GM12878 (cell line): ENCODE measurements at regions of chr16 and their contacts with region 1.

Region 1: DNA sequence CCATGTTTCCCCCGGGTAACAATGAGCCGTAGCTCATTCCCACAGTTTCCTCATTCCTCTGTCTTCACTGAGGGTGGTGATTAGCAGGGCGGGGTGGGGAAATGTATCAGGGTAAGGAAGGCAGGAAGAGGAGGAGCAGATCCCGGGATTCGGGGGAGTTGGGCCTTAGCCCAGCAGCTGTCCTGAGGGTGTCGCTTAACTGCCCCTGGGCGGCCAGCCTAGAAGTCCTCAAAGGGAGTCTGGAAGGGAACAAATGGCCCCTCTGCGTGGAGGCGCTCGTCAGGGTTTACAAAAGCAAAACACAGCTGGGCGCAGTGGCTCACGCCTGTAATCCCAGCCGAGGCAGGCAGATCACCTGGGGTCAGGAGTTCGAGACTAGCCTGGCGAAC is 14.3 kb downstream of the MLYCD start:
- DNase-seq: no peak
- ATAC-seq: no peak
- H3K4me3 ChIP-seq: no peak overlapping the region
- H3K27ac ChIP-seq: no peak overlapping the region
- H3K4me1 ChIP-seq: no peaks in the 10 kb centered on the region
- H3K27me3 ChIP-seq: no peaks in the 10 kb centered on the region
- CTCF ChIP-seq: no peak
- EP300 ChIP-seq: no peak
- POLR2A ChIP-seq: no peak
- RAD21 ChIP-seq: no peak

Region 2: GRCh38 chr16:83863682-83864081 is 49.6 kb before region 1 on chr16:
- CTCF ChIA-PET with region 1: no interaction called
- POLR2A ChIA-PET with region 1: no interaction called
- RAD21 ChIA-PET with region 1: no interaction called
- SMC1A ChIA-PET with region 1: no interaction called
- in situ Hi-C with region 1: loop called (anchors 5 kb)
- intact Hi-C with region 1: no loop called
- DNase-seq: no peak
- ATAC-seq: no peak
- H3K4me3 ChIP-seq: no peak overlapping the region
- H3K27ac ChIP-seq: no peak overlapping the region
- H3K4me1 ChIP-seq: no peaks in the 10 kb centered on the region
- H3K27me3 ChIP-seq: no peaks in the 10 kb centered on the region
- CTCF ChIP-seq: no peak
- EP300 ChIP-seq: no peak
- POLR2A ChIP-seq: no peak
- RAD21 ChIP-seq: no peak